OCI-LY7 (cell line): ENCODE measurements at regions of chr6 and their contacts with region 1.

Region 1: GRCh38 chr6:6547110-6547879 is 41.2 kb upstream of the LY86 start:
- DNase-seq: peak; percentile 87
- H3K4me3 ChIP-seq: peak overlapping the region; percentile 37
- H3K27ac ChIP-seq: no peak overlapping the region
- H3K4me1 ChIP-seq: peaks cover 20% of the 10 kb centered on the region
- CTCF ChIP-seq: peak; percentile 97

Region 2: GRCh38 chr6:5471044-5471443 is 1076.3 kb before region 1 on chr6:
- CTCF ChIA-PET with region 1: no interaction called
- POLR2A ChIA-PET with region 1: no interaction called
- intact Hi-C with region 1: loop called (anchors 1 kb)
- DNase-seq: peak; percentile 67
- H3K4me3 ChIP-seq: no peak overlapping the region
- H3K27ac ChIP-seq: no peak overlapping the region
- H3K4me1 ChIP-seq: peaks cover 7% of the 10 kb centered on the region
- CTCF ChIP-seq: peak; percentile 98

Region 3: GRCh38 chr6:5950361-5950785 is 596.9 kb before region 1 on chr6:
- CTCF ChIA-PET with region 1: no interaction called
- POLR2A ChIA-PET with region 1: no interaction called
- intact Hi-C with region 1: loop called (anchors 5 kb)
- DNase-seq: peak; percentile 44
- H3K4me3 ChIP-seq: no peak overlapping the region
- H3K27ac ChIP-seq: no peak overlapping the region
- H3K4me1 ChIP-seq: no peaks in the 10 kb centered on the region
- CTCF ChIP-seq: peak; percentile 85

Region 4: DNA sequence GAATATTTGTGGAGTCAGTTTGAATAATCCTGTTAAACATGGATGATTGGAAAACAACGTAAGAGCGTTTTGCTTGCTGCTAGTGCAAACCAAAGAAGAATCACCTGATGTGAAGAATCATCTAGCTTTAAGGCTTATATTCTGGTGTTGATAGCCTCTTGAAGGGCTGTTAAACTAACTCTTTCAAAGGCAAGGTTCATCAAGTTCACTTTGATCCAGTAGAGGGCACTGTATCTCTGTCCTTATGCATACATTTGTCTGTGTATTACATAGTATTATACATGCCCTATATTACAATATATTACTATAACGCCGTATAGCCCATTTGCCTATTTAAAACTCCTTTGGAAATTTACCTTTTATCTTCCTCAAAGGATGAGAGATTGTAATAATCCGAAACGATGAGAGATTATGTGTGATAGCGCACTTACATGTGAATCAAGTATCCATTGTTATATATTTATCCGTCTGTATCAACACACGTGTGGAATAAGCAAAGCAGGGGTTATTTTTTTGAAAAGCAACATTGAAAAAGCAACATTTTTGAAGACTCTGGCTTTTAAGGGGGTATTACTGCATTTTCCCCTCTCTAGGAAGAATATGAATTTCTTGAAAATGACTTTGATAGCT is 489.8 kb before region 1 on chr6:
- CTCF ChIA-PET with region 1: interaction called, 4 read pairs
- POLR2A ChIA-PET with region 1: no interaction called
- intact Hi-C with region 1: loop called (anchors 1 kb)
- DNase-seq: peak; percentile 79
- H3K4me3 ChIP-seq: no peak overlapping the region
- H3K27ac ChIP-seq: no peak overlapping the region
- H3K4me1 ChIP-seq: no peaks in the 10 kb centered on the region
- CTCF ChIP-seq: peak; percentile 92

Region 5: DNA sequence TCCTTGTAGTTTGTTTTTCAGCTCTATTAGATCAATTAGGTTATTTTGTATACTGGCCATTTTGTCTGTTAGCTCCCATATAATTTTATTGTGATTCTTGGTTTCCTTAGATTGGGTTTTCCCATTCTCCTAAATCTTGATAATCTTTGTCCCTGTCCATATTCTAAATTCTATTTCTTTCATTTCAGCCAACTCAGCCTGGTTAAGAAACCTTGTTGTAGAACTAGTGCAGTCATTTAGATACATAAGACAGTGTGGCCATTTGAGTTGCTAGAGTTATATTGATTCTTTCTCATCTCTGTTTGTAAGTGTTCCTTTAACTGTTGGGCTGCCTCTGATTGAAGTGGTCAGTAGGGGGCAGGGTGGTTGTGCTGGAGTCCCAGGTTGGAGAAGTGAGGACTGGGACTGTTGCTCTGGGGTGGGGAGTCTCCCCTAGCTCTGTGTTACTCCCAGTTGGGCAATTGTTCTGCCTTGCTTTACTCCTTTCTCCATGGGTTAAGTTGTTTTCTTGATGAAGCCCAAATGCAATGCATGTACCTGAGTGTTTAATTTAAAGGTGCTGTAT is 441.7 kb before region 1 on chr6:
- CTCF ChIA-PET with region 1: no interaction called
- POLR2A ChIA-PET with region 1: no interaction called
- intact Hi-C with region 1: loop called (anchors 1 kb)
- DNase-seq: peak; percentile 60
- H3K4me3 ChIP-seq: no peak overlapping the region
- H3K27ac ChIP-seq: no peak overlapping the region
- H3K4me1 ChIP-seq: no peaks in the 10 kb centered on the region
- CTCF ChIP-seq: peak; percentile 79

Region 6: GRCh38 chr6:6379573-6379972 is 167.7 kb before region 1 on chr6:
- CTCF ChIA-PET with region 1: no interaction called
- POLR2A ChIA-PET with region 1: no interaction called
- intact Hi-C with region 1: no loop called
- DNase-seq: peak; percentile 47
- H3K4me3 ChIP-seq: no peak overlapping the region
- H3K27ac ChIP-seq: peak overlapping the region; percentile 15
- H3K4me1 ChIP-seq: peaks cover 52% of the 10 kb centered on the region
- CTCF ChIP-seq: no peak

Region 7: GRCh38 chr6:6466967-6467761 is 80.1 kb before region 1 on chr6:
- CTCF ChIA-PET with region 1: no interaction called
- POLR2A ChIA-PET with region 1: no interaction called
- intact Hi-C with region 1: no loop called
- DNase-seq: no peak
- H3K4me3 ChIP-seq: no peak overlapping the region
- H3K27ac ChIP-seq: no peak overlapping the region
- H3K4me1 ChIP-seq: peaks cover 13% of the 10 kb centered on the region
- CTCF ChIP-seq: no peak

Region 8: DNA sequence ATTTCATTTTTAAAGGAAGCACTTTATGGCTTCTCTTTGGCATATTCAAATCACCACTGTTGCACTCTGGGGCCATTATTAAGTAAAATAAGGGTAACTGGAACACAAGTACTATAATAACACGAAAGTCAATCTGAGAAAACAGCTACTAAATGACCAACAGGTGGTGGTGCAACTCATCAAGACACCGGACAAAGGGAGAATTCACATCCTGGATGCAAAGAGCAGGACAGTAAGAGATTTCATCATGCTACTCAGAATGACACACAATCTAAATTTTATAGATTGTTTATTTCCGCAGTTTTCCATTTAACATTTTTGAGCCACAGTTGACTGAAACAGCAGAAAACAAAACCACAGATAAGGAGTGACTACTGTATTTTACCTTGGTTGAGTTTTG is 13.6 kb after region 1 on chr6:
- CTCF ChIA-PET with region 1: no interaction called
- POLR2A ChIA-PET with region 1: no interaction called
- intact Hi-C with region 1: no loop called
- DNase-seq: peak; percentile 28
- H3K4me3 ChIP-seq: no peak overlapping the region
- H3K27ac ChIP-seq: no peak overlapping the region
- H3K4me1 ChIP-seq: no peaks in the 10 kb centered on the region
- CTCF ChIP-seq: peak; percentile 56

Region 9: GRCh38 chr6:6676910-6677441 is 129.7 kb after region 1 on chr6:
- CTCF ChIA-PET with region 1: no interaction called
- POLR2A ChIA-PET with region 1: no interaction called
- intact Hi-C with region 1: no loop called
- DNase-seq: peak; percentile 79
- H3K4me3 ChIP-seq: no peak overlapping the region
- H3K27ac ChIP-seq: no peak overlapping the region
- H3K4me1 ChIP-seq: peaks cover 4% of the 10 kb centered on the region
- CTCF ChIP-seq: peak; percentile 98